ENCODE measurements at regions of chr1 and their contacts with region 1.

Region 1: DNA sequence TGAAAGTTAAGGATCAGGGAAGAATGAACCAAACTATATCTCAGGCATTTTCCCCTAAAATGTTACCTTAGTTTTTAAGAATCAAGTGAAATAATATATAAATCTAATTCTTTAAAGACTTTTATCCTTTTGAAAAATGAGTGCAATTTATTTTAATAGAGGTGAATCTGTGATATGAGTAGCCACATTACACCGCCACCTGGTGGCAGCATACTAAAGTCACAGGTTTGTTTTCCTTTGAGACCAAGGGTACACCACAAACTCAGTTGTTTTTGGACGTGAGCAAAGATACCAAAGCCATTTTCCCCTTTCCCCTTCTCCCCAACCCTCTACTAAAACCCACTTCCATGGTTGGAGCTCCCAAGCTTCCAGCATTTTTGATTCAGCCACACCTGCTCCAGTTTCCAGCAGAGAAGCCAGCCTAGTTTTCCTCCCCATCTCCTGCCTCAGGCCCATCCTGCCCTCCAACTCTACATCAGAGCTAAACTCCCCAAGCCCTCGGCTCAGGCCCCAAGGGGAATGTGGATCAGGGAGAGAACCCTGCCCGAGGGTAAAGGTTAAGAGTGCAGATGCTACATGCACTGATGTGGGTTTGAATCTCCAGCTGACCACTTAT is 22.9 kb upstream of the LDLRAP1 start:
- DNase-seq: peak; percentile 52 to 88 (median 78)
- ATAC-seq: peak; percentile 73
- H3K4me3 ChIP-seq: no peak overlapping the region
- H3K4me3 Mint-ChIP-seq: no peak overlapping the region
- H3K27ac ChIP-seq: no peak overlapping the region
- H3K27ac Mint-ChIP-seq: peak overlapping the region; percentile 25
- H3K4me1 ChIP-seq: peaks cover 5% of the 10 kb centered on the region
- H3K4me1 Mint-ChIP-seq: peaks cover 10% of the 10 kb centered on the region
- H3K27me3 ChIP-seq: no peaks in the 10 kb centered on the region
- H3K27me3 Mint-ChIP-seq: no peaks in the 10 kb centered on the region
- CTCF ChIP-seq: peak; percentile 83

Region 2: DNA sequence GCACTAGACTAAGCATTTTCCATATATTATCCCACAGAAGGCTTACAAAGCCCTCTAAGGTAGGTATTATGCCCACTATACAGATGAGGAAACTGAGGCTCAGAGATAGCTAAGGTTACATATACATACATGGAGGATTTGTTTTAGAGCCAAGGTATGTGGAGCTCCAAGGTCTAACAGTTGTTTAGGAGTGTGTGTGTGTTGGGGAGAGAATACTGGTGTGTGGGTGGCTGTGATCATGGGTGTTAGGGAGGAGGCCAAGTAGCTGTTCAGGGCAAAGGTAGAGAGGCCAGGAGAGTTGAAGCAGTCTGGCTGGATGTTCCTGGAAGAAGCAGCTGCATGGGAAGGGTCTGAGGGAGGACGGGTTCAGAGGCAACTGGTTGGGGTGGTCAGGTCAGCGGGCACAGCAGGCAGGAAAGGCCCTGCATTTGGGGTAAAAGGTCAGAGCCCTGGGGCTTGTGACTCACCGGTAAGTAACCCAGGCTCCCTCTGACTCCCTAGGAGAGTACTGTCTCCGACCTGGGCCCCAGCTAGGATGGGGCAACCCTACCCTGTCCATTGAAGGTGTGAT is 17.7 kb after region 1 on chr1:
- CTCF ChIA-PET with region 1: interaction called, 11 read pairs
- POLR2A ChIA-PET with region 1: no interaction called
- intact Hi-C with region 1: no loop called
- DNase-seq: no peak
- ATAC-seq: no peak
- H3K4me3 ChIP-seq: no peak overlapping the region
- H3K4me3 Mint-ChIP-seq: no peak overlapping the region
- H3K27ac ChIP-seq: no peak overlapping the region
- H3K27ac Mint-ChIP-seq: no peak overlapping the region
- H3K4me1 ChIP-seq: peaks cover 3% of the 10 kb centered on the region
- H3K4me1 Mint-ChIP-seq: peaks cover 9% of the 10 kb centered on the region
- H3K27me3 ChIP-seq: no peaks in the 10 kb centered on the region
- H3K27me3 Mint-ChIP-seq: no peaks in the 10 kb centered on the region
- CTCF ChIP-seq: no peak

Region 3: DNA sequence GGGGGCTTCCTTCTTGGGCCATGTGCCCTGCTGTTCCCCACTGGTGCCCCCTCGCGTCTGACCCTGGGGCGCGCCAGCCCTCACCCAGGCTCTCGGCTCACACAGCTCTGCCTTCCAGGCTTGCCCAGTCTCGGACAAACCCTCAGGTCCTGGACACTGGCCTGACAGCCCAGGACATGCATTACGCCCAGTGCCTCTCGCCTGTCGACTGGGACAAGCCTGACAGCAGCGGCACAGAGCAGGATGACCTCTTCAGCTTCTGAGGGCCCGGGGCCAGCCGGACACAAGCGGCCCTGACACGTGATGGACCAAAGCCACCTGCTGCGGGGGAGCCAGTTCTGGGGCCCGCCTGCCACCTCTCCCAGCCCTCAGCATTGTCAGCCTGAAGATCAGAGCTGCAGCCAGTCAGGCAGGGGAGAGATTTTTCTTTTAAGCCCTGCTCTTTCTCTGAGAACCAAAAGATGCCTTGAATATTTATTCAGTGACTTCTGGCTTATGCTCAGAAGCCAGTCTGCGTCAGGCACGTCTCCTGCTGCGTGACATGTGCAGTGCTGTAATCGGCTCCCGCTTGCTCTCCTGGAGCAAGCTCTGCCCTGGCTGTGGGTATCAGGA is 46.3 kb after region 1 on chr1:
- CTCF ChIA-PET with region 1: interaction called, 40 read pairs
- POLR2A ChIA-PET with region 1: interaction called, 3 read pairs
- intact Hi-C with region 1: no loop called
- DNase-seq: peak in 7 of 9 experiments; percentile 40 to 82 (median 74)
- ATAC-seq: peak; percentile 27
- H3K4me3 ChIP-seq: peak overlapping the region in 1 of 2 experiments; percentile 85
- H3K4me3 Mint-ChIP-seq: peak overlapping the region; percentile 95
- H3K27ac ChIP-seq: peak overlapping the region in 1 of 2 experiments; percentile 25
- H3K27ac Mint-ChIP-seq: peak overlapping the region; percentile 96
- H3K4me1 ChIP-seq: peaks cover 73% of the 10 kb centered on the region
- H3K4me1 Mint-ChIP-seq: peaks cover 86% of the 10 kb centered on the region
- H3K27me3 ChIP-seq: no peaks in the 10 kb centered on the region
- H3K27me3 Mint-ChIP-seq: no peaks in the 10 kb centered on the region
- CTCF ChIP-seq: peak; percentile 49

Region 4: DNA sequence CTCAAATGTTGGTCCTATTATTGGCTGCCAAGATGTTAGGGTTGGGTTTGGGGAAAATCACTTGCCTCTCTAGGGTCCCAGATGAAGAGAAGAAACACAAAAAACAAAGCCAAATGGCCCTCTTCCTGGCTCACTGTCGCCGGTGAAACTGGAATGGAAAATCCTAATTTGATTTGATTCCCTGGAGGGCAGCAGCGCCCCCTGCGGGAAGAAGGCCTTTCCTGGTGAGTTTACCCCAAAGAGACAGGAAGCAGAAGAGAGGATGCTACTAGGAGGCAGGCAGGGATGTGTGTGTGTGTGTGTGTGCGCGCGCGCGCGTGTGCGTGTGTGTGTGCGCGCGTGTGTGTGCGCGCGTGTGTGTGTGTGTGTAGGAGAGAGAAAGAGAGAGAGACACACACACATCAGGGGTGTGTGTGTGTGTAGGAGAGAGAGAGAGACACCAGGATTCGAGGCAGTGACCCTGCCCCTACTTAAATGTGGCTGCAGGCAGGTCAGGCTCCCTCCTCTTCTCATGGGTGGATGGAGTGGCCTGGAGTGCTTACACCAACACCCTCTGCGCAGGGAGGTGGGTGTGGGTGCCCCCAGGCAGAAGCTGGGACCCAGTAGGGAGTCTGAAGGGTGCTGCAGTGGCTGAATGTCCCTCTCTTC is 276.4 kb after region 1 on chr1:
- CTCF ChIA-PET with region 1: interaction called, 11 read pairs
- POLR2A ChIA-PET with region 1: no interaction called
- intact Hi-C with region 1: no loop called
- DNase-seq: peak; percentile 64 to 89 (median 86)
- ATAC-seq: peak; percentile 48
- H3K4me3 ChIP-seq: peak overlapping the region in 1 of 2 experiments; percentile 12
- H3K4me3 Mint-ChIP-seq: peak overlapping the region; percentile 75
- H3K27ac ChIP-seq: peak overlapping the region; percentile 33 to 62
- H3K27ac Mint-ChIP-seq: peak overlapping the region; percentile 97
- H3K4me1 ChIP-seq: peaks cover 52% of the 10 kb centered on the region
- H3K4me1 Mint-ChIP-seq: peaks cover 70% of the 10 kb centered on the region
- H3K27me3 ChIP-seq: no peaks in the 10 kb centered on the region
- H3K27me3 Mint-ChIP-seq: no peaks in the 10 kb centered on the region
- CTCF ChIP-seq: peak; percentile 62